ENCODE measurements at regions of chr6 and their contacts with region 1.

Region 1: GRCh38 chr6:159062564-159062945 is 17.8 kb upstream of the TAGAP start:
- DNase-seq: no peak
- ATAC-seq: peak; percentile 67
- H3K4me3 ChIP-seq: no peak overlapping the region
- H3K27ac ChIP-seq: no peak overlapping the region
- H3K4me1 ChIP-seq: peaks cover 11% of the 10 kb centered on the region
- H3K27me3 ChIP-seq: peaks cover 0 to 4% of the 10 kb centered on the region in 2 experiments; a peak in 1 of 4 replicates
- CTCF ChIP-seq: no peak
- EP300 ChIP-seq: no peak
- POLR2A ChIP-seq: no peak
- RAD21 ChIP-seq: no peak

Region 2: GRCh38 chr6:159074120-159074684 is 11.6 kb after region 1 on chr6:
- CTCF ChIA-PET with region 1: interaction called, 5 read pairs
- POLR2A ChIA-PET with region 1: interaction called, 6 read pairs
- RAD21 ChIA-PET with region 1: interaction called, 4 read pairs
- SMC1A ChIA-PET with region 1: interaction called, 19 read pairs
- in situ Hi-C with region 1: no loop called
- intact Hi-C with region 1: no loop called
- DNase-seq: no peak
- ATAC-seq: peak; percentile 97
- H3K4me3 ChIP-seq: no peak overlapping the region
- H3K27ac ChIP-seq: no peak overlapping the region
- H3K4me1 ChIP-seq: no peaks in the 10 kb centered on the region
- H3K27me3 ChIP-seq: peaks cover 0 to 5% of the 10 kb centered on the region in 2 experiments; a peak in 2 of 4 replicates
- CTCF ChIP-seq: no peak
- EP300 ChIP-seq: no peak
- POLR2A ChIP-seq: no peak
- RAD21 ChIP-seq: no peak

Region 3: DNA sequence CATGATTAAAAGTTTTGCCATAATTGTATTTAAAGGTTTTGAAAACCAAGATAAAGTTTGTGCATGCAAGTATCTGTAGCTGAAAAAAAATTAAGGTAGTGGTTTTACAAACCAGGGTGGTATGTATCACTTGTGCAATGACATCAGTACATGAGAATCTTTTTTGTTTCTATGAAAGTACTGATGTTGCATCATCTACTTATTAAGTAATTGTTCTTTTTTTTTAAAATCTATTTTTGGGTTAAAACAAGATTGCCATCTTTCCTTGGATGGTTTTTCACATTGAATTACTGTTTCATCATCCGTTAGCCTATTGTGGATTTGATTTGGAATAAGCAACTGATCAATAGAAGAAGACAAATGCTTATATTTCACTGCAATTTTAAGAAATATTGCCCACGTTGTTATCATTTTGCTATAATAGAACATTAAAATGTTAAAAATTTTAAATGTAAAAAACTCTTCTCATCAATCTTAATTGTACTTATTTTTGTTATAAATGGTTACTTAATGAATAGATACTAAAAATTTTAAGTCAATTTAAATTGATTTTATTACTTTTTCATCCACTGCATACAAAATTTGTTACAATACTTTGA is 22.0 kb after region 1 on chr6:
- CTCF ChIA-PET with region 1: interaction called, 6 read pairs
- POLR2A ChIA-PET with region 1: interaction called, 6 read pairs
- RAD21 ChIA-PET with region 1: interaction called, 5 read pairs
- SMC1A ChIA-PET with region 1: interaction called, 16 read pairs
- in situ Hi-C with region 1: no loop called
- intact Hi-C with region 1: no loop called
- DNase-seq: no peak
- ATAC-seq: peak; percentile 46; the same call in 2 of the 3 replicates
- H3K4me3 ChIP-seq: no peak overlapping the region
- H3K27ac ChIP-seq: no peak overlapping the region
- H3K4me1 ChIP-seq: peaks cover 4% of the 10 kb centered on the region; the same call in 1 of the 2 replicates
- H3K27me3 ChIP-seq: no peaks in the 10 kb centered on the region
- CTCF ChIP-seq: no peak
- EP300 ChIP-seq: no peak
- POLR2A ChIP-seq: no peak
- RAD21 ChIP-seq: no peak